Right lobe of liver (tissue), 6 donors: ENCODE measurements at regions of chr2 and their contacts with region 1.

Region 1: DNA sequence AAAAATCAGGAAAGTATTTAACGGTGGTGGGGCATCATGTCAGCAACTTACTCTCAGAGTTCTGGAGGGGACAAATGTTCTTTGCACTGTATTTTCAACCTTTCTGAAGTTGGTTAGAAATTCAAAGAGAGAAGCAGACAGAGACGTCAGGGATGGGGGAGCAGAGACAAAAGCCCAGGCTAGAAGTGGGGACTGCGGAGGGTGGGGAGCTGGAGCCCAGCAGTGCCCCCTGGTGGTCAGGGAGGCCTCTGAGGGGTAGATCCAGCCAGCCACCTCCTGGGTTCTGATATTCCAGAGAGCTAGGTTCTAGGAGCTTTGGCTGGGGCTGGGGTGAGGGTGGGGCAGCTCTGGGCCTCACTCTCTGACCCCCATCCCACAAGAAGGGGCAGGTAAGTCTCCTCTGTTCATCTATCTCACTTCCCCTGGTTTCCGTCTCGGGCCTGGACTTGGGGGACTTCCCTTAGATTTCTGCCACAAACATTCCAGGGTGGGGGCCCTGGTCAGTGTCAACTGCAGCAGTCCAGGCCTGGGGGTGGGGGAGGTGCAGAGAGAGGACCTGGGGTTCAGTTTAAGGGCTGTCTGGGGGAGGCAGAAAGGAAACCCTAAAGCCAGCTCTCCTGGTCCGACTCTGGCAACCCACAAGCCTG is 8.9 kb downstream of the TNS1 start:
- DNase-seq: peak; percentile 71 to 73 (median 73)
- ATAC-seq: peak; percentile 78 to 87 (median 82)
- H3K4me3 ChIP-seq: no peak overlapping the region
- H3K27ac ChIP-seq: no peak overlapping the region
- H3K4me1 ChIP-seq: no peaks in the 10 kb centered on the region
- H3K27me3 ChIP-seq: no peaks in the 10 kb centered on the region
- CTCF ChIP-seq: peak; percentile 65 to 83 (median 77)
- POLR2A ChIP-seq: no peak

Region 2: GRCh38 chr2:216181351-216181750 is 1812.6 kb before region 1 on chr2:
- intact Hi-C with region 1: no loop called
- DNase-seq: no peak
- ATAC-seq: no peak
- H3K4me3 ChIP-seq: no peak overlapping the region
- H3K27ac ChIP-seq: no peak overlapping the region
- H3K4me1 ChIP-seq: peaks cover 0 to 10% (median 0%) of the 10 kb centered on the region in 4 donors
- H3K27me3 ChIP-seq: no peaks in the 10 kb centered on the region
- CTCF ChIP-seq: no peak
- POLR2A ChIP-seq: no peak

Region 3: GRCh38 chr2:217785544-217786045 is 208.3 kb before region 1 on chr2:
- intact Hi-C with region 1: loop called (anchors 5 kb)
- DNase-seq: peak; percentile 67 to 77 (median 76)
- ATAC-seq: peak; percentile 83 to 93 (median 92)
- H3K4me3 ChIP-seq: no peak overlapping the region
- H3K27ac ChIP-seq: no peak overlapping the region
- H3K4me1 ChIP-seq: no peaks in the 10 kb centered on the region
- H3K27me3 ChIP-seq: no peaks in the 10 kb centered on the region
- CTCF ChIP-seq: peak; percentile 92 to 95 (median 93)
- POLR2A ChIP-seq: no peak

Region 4: GRCh38 chr2:217886720-217887309 is 107.1 kb before region 1 on chr2:
- intact Hi-C with region 1: loop called (anchors 10 kb)
- DNase-seq: peak in 2 of 3 donors; percentile 65 to 76
- ATAC-seq: peak; percentile 48 to 67 (median 58)
- H3K4me3 ChIP-seq: no peak overlapping the region
- H3K27ac ChIP-seq: no peak overlapping the region
- H3K4me1 ChIP-seq: peaks cover 0 to 6% (median 0%) of the 10 kb centered on the region in 4 donors
- H3K27me3 ChIP-seq: no peaks in the 10 kb centered on the region
- CTCF ChIP-seq: peak; percentile 73 to 83 (median 78)
- POLR2A ChIP-seq: no peak